ENCODE measurements at regions of chr2 and their contacts with region 1.

Region 1: DNA sequence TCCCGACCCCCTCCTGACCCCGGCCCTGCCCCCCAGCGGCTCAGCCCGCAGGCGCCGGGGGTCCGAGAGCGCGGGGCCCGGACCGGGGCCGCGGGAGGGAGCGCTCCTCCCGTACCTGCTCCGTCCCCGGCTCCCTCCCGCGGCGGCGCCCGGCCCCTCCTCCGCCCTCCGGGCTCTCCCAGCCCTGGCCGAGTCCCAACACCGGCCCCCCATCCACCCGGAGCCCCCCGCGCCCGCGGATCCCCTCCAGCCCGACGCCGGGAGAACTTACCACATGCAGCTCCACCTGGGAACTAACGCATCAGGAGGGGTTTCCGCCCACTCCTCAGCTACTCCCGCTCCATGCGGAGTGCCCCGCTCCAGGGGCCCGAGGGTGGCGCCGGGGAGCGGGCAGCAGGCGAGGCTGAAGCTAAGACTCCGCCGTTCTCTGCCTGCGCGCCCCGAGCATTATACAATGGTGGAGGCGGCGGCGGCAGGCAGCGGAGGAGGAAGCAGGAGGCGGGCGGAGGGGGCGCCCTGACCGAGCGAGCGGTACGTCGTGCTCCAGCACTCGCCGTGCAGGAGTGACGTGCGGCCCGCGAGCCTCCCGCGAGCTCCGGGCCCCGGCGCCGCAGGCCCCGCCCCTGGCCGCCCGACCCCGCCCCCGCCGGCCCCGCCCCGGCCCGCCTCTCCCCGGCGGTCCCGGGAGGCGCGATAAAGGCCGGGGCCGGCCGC is at the start of gene SERTAD2:
- DNase-seq: peak; percentile 83 to 94 (median 86)
- ATAC-seq: peak; percentile 86 to 87
- H3K4me3 Mint-ChIP-seq: peak within 1 kb of the TSS; percentile 85 to 98 (median 92)
- H3K27ac Mint-ChIP-seq: peak within 1 kb of the TSS; percentile 82 to 98 (median 94)
- H3K4me1 Mint-ChIP-seq: peaks cover 37 to 83% (median 76%) of the 10 kb centered on the region in 4 donors
- H3K27me3 Mint-ChIP-seq: no peaks in the 10 kb centered on the region
- polyA plus RNA-seq, gene SERTAD2: 5.5 to 9.2 (median 6.1) TPM

Region 2: GRCh38 chr2:64523666-64524603 is 129.6 kb before region 1 on chr2 and contains the start of gene AFTPH:
- POLR2A ChIA-PET with region 1: interaction called, 20 read pairs
- DNase-seq: peak; percentile 92 to 100 (median 100)
- ATAC-seq: peak; percentile 87 to 92
- H3K4me3 Mint-ChIP-seq: peak within 1 kb of the TSS; percentile 94 to 100 (median 99)
- H3K27ac Mint-ChIP-seq: peak within 1 kb of the TSS; percentile 95 to 99 (median 99)
- H3K4me1 Mint-ChIP-seq: peaks cover 22 to 42% (median 40%) of the 10 kb centered on the region in 4 donors
- H3K27me3 Mint-ChIP-seq: no peaks in the 10 kb centered on the region
- polyA plus RNA-seq, gene AFTPH: 20.9 to 23.6 (median 22.5) TPM

Region 3: GRCh38 chr2:64635976-64636911 is 17.3 kb before region 1 on chr2:
- POLR2A ChIA-PET with region 1: interaction called, 25 read pairs
- DNase-seq: peak in 1 of 10 donors; percentile 22
- ATAC-seq: peak; percentile 49 to 51
- H3K4me3 Mint-ChIP-seq: peak overlapping the region; percentile 57 to 88 (median 70)
- H3K27ac Mint-ChIP-seq: peak overlapping the region; percentile 89 to 97 (median 92)
- H3K4me1 Mint-ChIP-seq: peaks cover 37 to 70% (median 63%) of the 10 kb centered on the region in 4 donors
- H3K27me3 Mint-ChIP-seq: no peaks in the 10 kb centered on the region

Region 4: GRCh38 chr2:64675860-64676259 is 22.4 kb after region 1 on chr2:
- POLR2A ChIA-PET with region 1: interaction called, 83 read pairs
- DNase-seq: no peak
- ATAC-seq: peak; percentile 57 to 65
- H3K4me3 Mint-ChIP-seq: peak overlapping the region in 1 of 10 donors; percentile 20
- H3K27ac Mint-ChIP-seq: peak overlapping the region in 7 of 10 donors; percentile 15 to 92 (median 73)
- H3K4me1 Mint-ChIP-seq: peaks cover 18 to 54% (median 46%) of the 10 kb centered on the region in 4 donors
- H3K27me3 Mint-ChIP-seq: no peaks in the 10 kb centered on the region

Region 5: DNA sequence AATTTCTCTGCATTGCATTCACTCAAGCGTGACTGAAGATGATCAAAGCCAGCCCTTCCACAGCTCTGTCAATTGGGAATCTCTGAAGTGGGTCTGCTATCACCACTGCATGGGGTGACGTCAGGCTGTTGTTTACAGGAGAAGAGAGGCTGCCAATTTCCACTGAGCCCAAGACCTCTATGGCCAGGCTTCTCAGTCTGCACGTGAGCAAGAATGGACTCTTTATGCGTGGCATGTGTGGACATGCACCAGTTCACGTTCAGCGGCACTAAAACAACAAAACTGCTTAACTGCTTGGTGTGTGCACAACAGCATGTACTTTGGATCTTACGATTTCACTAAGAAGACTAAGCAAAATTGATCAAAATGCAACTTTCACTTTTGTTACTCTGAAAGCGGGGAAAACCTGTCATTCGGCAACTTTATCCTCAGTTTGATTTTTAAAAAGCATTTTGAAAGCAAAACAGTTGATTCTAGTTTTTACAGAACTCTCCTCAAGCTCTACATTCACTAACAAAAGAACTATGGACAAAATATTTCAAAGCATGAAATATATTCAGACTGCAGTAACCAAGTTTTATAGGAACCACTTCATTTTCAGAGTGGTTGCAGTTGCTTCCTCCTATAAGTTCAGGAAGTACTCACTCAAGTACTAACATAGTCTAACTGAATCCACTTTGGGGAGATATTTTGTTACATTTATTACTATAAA is 77.2 kb after region 1 on chr2:
- POLR2A ChIA-PET with region 1: interaction called, 52 read pairs
- DNase-seq: peak; percentile 17 to 67 (median 48)
- ATAC-seq: peak; percentile 86
- H3K4me3 Mint-ChIP-seq: peak overlapping the region; percentile 80 to 93 (median 90)
- H3K27ac Mint-ChIP-seq: peak overlapping the region; percentile 95 to 100 (median 98)
- H3K4me1 Mint-ChIP-seq: peaks cover 25 to 62% (median 53%) of the 10 kb centered on the region in 4 donors
- H3K27me3 Mint-ChIP-seq: no peaks in the 10 kb centered on the region

Region 6: DNA sequence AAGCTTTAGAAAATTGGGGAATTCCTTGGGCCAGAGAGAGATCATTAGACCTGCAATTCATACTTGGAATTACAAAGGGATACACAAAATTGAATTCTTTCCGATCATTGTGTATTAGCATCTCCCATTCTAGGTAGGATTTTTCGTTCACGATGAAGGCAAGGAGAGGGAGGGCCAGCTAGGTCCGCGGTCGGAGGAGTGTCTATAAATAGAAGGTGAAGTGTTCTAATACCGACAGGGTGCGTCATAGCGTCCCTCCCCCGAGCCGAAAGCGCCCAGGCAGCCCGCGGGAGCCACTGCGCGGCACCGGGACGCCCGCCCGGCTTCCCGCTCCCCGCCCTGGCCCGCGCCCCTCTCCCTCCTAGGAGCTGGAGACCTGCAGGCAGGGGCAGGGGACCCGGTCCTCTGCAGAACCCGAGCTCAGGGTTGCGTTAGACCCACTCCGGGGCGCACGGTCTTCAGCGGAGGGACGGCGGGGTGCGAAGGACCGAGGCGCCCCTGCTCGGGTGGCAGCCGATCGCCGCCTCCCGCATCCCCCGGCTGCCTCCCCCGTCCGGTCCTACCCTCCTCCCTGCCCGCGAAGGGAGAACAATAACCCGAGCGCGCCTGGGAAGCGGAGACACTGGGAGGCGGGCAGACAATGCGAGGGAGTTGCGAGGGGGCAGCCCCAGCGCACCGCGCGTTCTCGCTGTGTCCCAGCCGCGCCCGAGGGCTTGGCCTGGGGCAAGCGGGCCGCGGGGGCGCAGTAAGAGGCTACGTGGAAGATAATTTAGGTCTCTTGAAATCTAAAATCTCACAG is 114.4 kb after region 1 on chr2:
- POLR2A ChIA-PET with region 1: interaction called, 46 read pairs
- DNase-seq: peak; percentile 51 to 85 (median 57)
- ATAC-seq: peak; percentile 73 to 75
- H3K4me3 Mint-ChIP-seq: peak overlapping the region; percentile 92 to 99 (median 94)
- H3K27ac Mint-ChIP-seq: peak overlapping the region; percentile 90 to 99 (median 96)
- H3K4me1 Mint-ChIP-seq: peaks cover 11 to 26% (median 17%) of the 10 kb centered on the region in 4 donors
- H3K27me3 Mint-ChIP-seq: no peaks in the 10 kb centered on the region

Region 7: GRCh38 chr2:64831134-64831976 is 177.8 kb after region 1 on chr2:
- POLR2A ChIA-PET with region 1: interaction called, 30 read pairs
- DNase-seq: peak; percentile 57 to 91 (median 78)
- ATAC-seq: peak; percentile 95 to 96
- H3K4me3 Mint-ChIP-seq: peak overlapping the region in 5 of 10 donors; percentile 17 to 50 (median 33)
- H3K27ac Mint-ChIP-seq: peak overlapping the region in 6 of 10 donors; percentile 19 to 56 (median 40)
- H3K4me1 Mint-ChIP-seq: peaks cover 0 to 17% (median 5%) of the 10 kb centered on the region in 4 donors
- H3K27me3 Mint-ChIP-seq: peaks cover 0 to 7% (median 0%) of the 10 kb centered on the region in 5 donors

Measured in naive thymus-derived CD8-positive, alpha-beta T cell (primary cell).